PC-9 (cell line): ENCODE measurements at regions of chr3 and their contacts with region 1.

Region 1: DNA sequence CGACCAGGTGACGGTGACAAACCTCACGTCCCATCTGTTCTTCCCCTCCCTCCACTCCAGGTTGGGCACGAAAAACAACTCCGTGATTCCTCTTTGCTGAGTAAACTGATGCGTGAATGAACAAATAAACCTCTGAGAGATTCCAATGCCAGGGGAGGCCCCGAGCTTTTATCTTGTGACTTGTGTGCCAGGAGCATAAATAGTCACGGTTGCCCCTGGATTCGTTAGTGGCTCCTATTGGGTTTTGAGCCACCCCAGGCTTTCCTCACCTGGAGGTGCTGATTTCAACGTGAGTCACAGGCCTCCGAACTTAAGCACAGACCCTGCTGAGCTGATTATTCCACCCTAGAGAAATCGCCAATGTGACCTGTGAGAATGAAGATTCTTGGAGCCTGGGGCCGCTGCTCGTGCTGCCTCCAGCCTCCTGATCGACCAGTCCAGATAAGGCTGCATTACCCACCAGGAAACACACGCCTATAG is 119.2 kb downstream of the SHQ1 start:
- DNase-seq: peak; percentile 75 to 95
- H3K4me3 ChIP-seq: peak overlapping the region; percentile 26; the same call in 1 of the 2 replicates
- H3K27ac ChIP-seq: peak overlapping the region; percentile 60
- H3K4me1 ChIP-seq: peaks cover 33% of the 10 kb centered on the region
- H3K27me3 ChIP-seq: no peaks in the 10 kb centered on the region
- CTCF ChIP-seq: no peak

Region 2: GRCh38 chr3:72127844-72128243 is 601.2 kb before region 1 on chr3:
- CTCF ChIA-PET with region 1: no interaction called
- POLR2A ChIA-PET with region 1: no interaction called
- intact Hi-C with region 1: no loop called
- DNase-seq: no peak
- H3K4me3 ChIP-seq: no peak overlapping the region
- H3K27ac ChIP-seq: no peak overlapping the region
- H3K4me1 ChIP-seq: no peaks in the 10 kb centered on the region
- H3K27me3 ChIP-seq: no peaks in the 10 kb centered on the region
- CTCF ChIP-seq: no peak

Region 3: GRCh38 chr3:72339116-72340030 is 389.7 kb before region 1 on chr3:
- CTCF ChIA-PET with region 1: no interaction called
- POLR2A ChIA-PET with region 1: no interaction called
- intact Hi-C with region 1: loop called (anchors 2 kb)
- DNase-seq: peak; percentile 68 to 93
- H3K4me3 ChIP-seq: no peak overlapping the region
- H3K27ac ChIP-seq: peak overlapping the region; percentile 84
- H3K4me1 ChIP-seq: peaks cover 14% of the 10 kb centered on the region
- H3K27me3 ChIP-seq: no peaks in the 10 kb centered on the region
- CTCF ChIP-seq: no peak

Region 4: DNA sequence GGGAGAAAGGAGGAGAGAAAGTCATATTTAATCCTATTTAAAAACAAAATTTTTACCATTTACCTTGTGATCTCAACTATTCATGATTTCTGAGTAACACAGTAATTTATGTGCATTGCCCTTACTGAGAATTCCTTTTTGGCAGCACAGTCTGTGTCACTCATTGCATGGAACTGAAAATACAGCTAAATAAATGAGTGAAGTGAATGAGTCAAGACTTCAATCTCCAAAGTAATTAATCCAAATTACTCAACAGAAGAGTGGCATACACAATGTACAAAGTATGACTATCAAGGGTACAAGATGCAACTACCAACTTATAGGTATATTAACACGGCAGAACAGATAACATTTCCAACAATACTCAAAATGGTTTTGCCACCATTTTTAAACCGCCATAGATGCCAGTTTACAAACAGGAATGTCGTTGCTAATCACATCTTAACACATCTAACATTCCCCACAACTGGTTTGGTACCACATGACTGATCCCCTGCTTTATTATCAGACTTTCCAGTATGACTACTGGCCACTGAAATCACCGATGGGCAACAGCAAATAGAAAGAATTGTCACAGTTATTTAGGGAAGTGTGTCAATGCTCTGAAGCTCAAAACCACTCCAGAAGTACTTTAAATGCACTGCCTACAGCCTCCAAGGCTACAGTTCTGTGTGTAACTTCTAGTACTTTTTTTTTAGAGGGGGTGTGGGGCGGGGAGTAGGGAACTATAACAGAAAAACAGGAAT is 291.2 kb before region 1 on chr3:
- CTCF ChIA-PET with region 1: no interaction called
- POLR2A ChIA-PET with region 1: no interaction called
- intact Hi-C with region 1: no loop called
- DNase-seq: no peak
- H3K4me3 ChIP-seq: no peak overlapping the region
- H3K27ac ChIP-seq: no peak overlapping the region
- H3K4me1 ChIP-seq: no peaks in the 10 kb centered on the region
- H3K27me3 ChIP-seq: no peaks in the 10 kb centered on the region
- CTCF ChIP-seq: no peak

Region 5: GRCh38 chr3:72768006-72768441 is 39.0 kb after region 1 on chr3:
- CTCF ChIA-PET with region 1: no interaction called
- POLR2A ChIA-PET with region 1: no interaction called
- intact Hi-C with region 1: no loop called
- DNase-seq: no peak
- H3K4me3 ChIP-seq: no peak overlapping the region
- H3K27ac ChIP-seq: no peak overlapping the region
- H3K4me1 ChIP-seq: no peaks in the 10 kb centered on the region
- H3K27me3 ChIP-seq: no peaks in the 10 kb centered on the region
- CTCF ChIP-seq: no peak

Region 6: GRCh38 chr3:72960812-72961518 is 231.9 kb after region 1 on chr3:
- CTCF ChIA-PET with region 1: no interaction called
- POLR2A ChIA-PET with region 1: no interaction called
- intact Hi-C with region 1: no loop called
- DNase-seq: peak in 1 of 2 experiments; percentile 54
- H3K4me3 ChIP-seq: no peak overlapping the region
- H3K27ac ChIP-seq: no peak overlapping the region
- H3K4me1 ChIP-seq: no peaks in the 10 kb centered on the region
- H3K27me3 ChIP-seq: no peaks in the 10 kb centered on the region
- CTCF ChIP-seq: no peak